ENCODE measurements at regions of chr12 and their contacts with region 1.

Region 1: DNA sequence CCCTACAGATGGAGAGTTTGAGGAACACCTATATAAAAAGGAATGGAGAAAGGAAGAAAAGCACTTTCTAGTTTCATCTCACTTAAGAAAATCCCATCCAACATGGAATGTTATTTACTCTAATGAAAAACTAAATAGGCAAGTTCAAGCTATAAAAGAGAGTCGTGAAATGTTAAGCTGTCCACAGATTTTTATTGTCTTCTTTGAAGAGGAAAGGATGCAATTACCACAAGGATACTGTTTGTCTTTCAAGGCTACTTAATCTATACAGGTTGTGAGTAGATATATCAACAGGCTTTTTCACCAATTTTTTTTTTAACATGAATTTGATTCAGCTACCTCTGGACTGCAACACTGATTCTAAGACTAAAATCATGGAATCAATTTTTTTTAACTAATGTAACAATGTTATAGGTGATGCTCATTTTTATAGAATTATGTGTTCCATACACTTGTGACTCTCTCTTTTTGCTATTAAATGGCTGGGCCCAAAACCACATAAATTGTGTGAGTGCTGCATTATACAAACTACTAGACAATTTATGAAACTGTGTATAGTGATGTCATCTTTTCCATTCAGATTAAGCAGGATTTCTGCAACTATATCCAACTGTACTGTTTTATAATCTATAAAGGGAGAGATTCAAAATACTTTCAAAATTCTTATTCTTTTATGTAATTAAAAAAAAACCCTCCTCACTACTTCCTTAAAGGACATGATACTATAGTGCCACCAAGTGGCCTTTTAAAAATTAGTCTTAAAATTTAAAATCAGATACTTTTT is 26.8 kb upstream of the BMAL2 start:
- DNase-seq: peak; percentile 27
- ATAC-seq: no peak
- H3K4me3 ChIP-seq: no peak overlapping the region
- H3K27ac ChIP-seq: no peak overlapping the region
- H3K4me1 ChIP-seq: no peaks in the 10 kb centered on the region
- H3K27me3 ChIP-seq: no peaks in the 10 kb centered on the region
- CTCF ChIP-seq: peak in 2 of 3 experiments; percentile 54 to 69; a peak in 3 of 6 replicates
- POLR2A ChIP-seq: no peak
- RAD21 ChIP-seq: peak; percentile 68

Region 2: DNA sequence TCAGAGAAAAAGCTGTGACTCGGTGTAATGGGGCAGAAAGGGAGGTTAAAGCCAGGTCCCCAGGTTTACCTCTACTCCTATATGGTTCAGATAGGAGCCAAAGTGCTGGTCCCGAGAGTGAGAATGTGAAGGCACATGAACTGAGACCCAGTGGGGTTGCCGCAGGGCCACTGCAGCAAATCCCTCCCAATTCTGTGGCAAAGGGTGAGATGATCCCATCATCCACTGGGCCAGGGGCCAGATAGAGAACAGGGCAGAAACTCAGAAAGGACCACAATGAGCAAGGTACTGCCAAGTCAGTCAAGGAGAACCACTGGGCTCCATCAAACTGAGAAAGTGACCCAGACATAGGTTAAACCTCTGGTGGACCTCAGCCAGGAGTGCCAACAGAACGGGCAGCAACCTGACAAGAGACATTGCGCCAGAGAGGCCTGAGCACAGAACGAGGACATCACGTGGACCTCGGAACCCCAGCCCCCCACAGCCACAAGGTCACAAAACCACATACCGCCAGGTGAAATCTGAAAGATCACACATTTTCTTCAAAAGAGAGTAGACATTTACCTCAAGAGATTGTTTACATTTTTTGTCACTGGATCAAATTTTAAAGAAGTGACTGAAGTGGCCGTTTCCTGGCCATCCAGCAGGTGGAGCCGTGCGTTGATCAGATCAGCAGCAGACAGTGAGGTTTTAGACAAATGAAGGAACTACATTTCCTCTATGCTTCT is 452.4 kb before region 1 on chr12:
- CTCF ChIA-PET with region 1: interaction called, 6 read pairs
- POLR2A ChIA-PET with region 1: no interaction called
- RAD21 ChIA-PET with region 1: no interaction called
- intact Hi-C with region 1: loop called (anchors 5 kb)
- DNase-seq: no peak
- ATAC-seq: peak; percentile 96
- H3K4me3 ChIP-seq: no peak overlapping the region
- H3K27ac ChIP-seq: no peak overlapping the region
- H3K4me1 ChIP-seq: 0 out of 4 replicates have a peak, but pooled peaks cover 0 to 3% of the 10 kb centered on the region in 2 experiments
- H3K27me3 ChIP-seq: no peaks in the 10 kb centered on the region
- CTCF ChIP-seq: peak; percentile 84 to 93 (median 91)
- POLR2A ChIP-seq: no peak
- RAD21 ChIP-seq: peak; percentile 75

Region 3: GRCh38 chr12:27034607-27035293 is 271.1 kb before region 1 on chr12:
- CTCF ChIA-PET with region 1: interaction called, 15 read pairs
- POLR2A ChIA-PET with region 1: no interaction called
- RAD21 ChIA-PET with region 1: no interaction called
- intact Hi-C with region 1: loop called (anchors 1 kb)
- DNase-seq: no peak
- ATAC-seq: no peak
- H3K4me3 ChIP-seq: no peak overlapping the region
- H3K27ac ChIP-seq: no peak overlapping the region
- H3K4me1 ChIP-seq: no peaks in the 10 kb centered on the region
- H3K27me3 ChIP-seq: no peaks in the 10 kb centered on the region
- CTCF ChIP-seq: no peak
- POLR2A ChIP-seq: no peak
- RAD21 ChIP-seq: no peak

Region 4: GRCh38 chr12:27142101-27142721 is 163.7 kb before region 1 on chr12:
- CTCF ChIA-PET with region 1: interaction called, 9 read pairs
- POLR2A ChIA-PET with region 1: no interaction called
- RAD21 ChIA-PET with region 1: no interaction called
- intact Hi-C with region 1: loop called (anchors 10 kb)
- DNase-seq: peak; percentile 60
- ATAC-seq: peak; percentile 98
- H3K4me3 ChIP-seq: no peak overlapping the region
- H3K27ac ChIP-seq: no peak overlapping the region
- H3K4me1 ChIP-seq: no peaks in the 10 kb centered on the region
- H3K27me3 ChIP-seq: no peaks in the 10 kb centered on the region
- CTCF ChIP-seq: peak; percentile 62 to 86 (median 85); a peak in 5 of 6 replicates
- POLR2A ChIP-seq: no peak
- RAD21 ChIP-seq: peak; percentile 75

Region 5: GRCh38 chr12:27319848-27320247 is 14.0 kb after region 1 on chr12:
- CTCF ChIA-PET with region 1: interaction called, 12 read pairs
- POLR2A ChIA-PET with region 1: no interaction called
- RAD21 ChIA-PET with region 1: no interaction called
- intact Hi-C with region 1: no loop called
- DNase-seq: no peak
- ATAC-seq: no peak
- H3K4me3 ChIP-seq: no peak overlapping the region
- H3K27ac ChIP-seq: no peak overlapping the region
- H3K4me1 ChIP-seq: no peaks in the 10 kb centered on the region
- H3K27me3 ChIP-seq: no peaks in the 10 kb centered on the region
- CTCF ChIP-seq: no peak
- POLR2A ChIP-seq: no peak
- RAD21 ChIP-seq: no peak